ENCODE measurements at regions of chr3 and their contacts with region 1.

Region 1: GRCh38 chr3:197541756-197542539 is 13.8 kb downstream of the BDH1 start:
- DNase-seq: peak; percentile 83
- ATAC-seq: peak; percentile 46
- H3K4me3 Mint-ChIP-seq: peak overlapping the region; percentile 46
- H3K27ac Mint-ChIP-seq: peak overlapping the region; percentile 97
- H3K4me1 Mint-ChIP-seq: peaks cover 48% of the 10 kb centered on the region
- H3K27me3 Mint-ChIP-seq: no peaks in the 10 kb centered on the region; the same call in 1 of the 2 replicates
- CTCF ChIP-seq: no peak

Region 2: DNA sequence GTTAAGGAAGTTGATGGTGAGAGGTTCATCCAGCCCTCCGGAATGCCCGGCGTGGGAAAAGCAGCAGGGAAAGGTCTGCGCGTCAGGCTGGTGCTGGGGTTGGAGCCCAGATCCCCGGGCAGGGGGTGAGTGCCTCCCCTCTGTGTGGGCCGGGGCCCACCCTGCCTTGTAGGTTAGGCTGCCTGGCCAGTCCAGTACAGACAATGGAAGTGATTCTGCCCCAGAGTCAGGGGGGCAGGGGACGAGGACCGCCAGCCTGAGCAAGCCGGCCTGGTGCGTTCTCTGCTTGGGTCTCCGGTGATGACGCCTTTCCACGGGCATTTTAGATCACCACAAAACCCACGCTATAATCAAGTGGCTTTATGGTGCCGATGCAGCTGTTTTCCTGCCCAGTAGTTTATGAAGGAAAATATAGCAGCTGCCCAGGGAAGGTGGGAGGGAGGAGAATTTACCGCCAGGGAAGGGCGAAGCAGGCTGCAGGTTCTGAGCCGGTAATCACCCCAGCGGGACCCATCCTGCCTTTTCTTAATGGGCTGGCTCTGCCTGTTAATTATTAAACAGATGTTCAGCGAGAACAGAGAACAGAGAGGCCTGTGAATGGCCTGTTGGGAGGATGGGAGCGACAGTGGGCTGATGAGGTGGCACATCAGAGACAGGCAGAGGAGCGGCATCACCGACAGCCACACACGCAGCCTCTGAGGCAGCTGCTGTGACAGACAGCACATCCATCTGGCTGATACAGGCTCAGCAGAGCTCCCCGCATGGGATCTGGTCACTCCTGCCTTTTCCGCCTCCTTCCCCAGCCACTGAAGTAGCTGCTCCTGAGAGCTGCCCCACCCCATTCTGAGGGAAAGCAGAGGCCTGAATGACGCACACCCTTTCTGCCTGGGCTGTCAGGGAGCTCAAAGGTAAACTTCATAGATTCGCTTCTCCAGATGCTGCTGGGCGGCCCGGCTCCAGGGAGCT is 21.4 kb before region 1 on chr3:
- CTCF ChIA-PET with region 1: interaction called, 10 read pairs
- POLR2A ChIA-PET with region 1: interaction called, 4 read pairs
- DNase-seq: peak; percentile 44
- ATAC-seq: peak; percentile 80
- H3K4me3 Mint-ChIP-seq: peak overlapping the region; percentile 10; the same call in 1 of the 2 replicates
- H3K27ac Mint-ChIP-seq: peak overlapping the region; percentile 23; the same call in 1 of the 2 replicates
- H3K4me1 Mint-ChIP-seq: peaks cover 45% of the 10 kb centered on the region
- H3K27me3 Mint-ChIP-seq: no peaks in the 10 kb centered on the region
- CTCF ChIP-seq: no peak

Region 3: DNA sequence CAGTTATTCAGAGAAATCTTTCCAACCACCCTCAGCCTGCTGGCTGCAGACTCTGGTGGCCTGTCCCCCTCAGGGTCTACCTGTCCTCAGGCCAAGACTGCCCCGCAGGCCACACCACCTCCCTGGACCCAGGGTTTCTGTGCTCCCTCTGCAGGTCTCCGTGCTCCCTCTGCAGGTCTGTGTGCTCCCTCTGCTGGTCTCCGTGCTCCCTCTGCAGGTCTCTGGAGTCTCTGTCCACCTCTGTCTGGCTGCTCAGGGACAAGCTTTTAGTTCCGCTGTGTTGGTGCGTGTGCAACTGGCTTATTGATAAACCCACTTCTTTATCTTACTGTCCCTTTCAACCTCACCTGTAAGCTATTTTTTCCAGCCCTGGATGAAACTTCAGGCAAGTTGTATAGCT is 16.2 kb before region 1 on chr3:
- CTCF ChIA-PET with region 1: interaction called, 12 read pairs
- POLR2A ChIA-PET with region 1: interaction called, 4 read pairs
- DNase-seq: no peak
- ATAC-seq: no peak
- H3K4me3 Mint-ChIP-seq: no peak overlapping the region
- H3K27ac Mint-ChIP-seq: peak overlapping the region; percentile 31; the same call in 1 of the 2 replicates
- H3K4me1 Mint-ChIP-seq: peaks cover 20% of the 10 kb centered on the region
- H3K27me3 Mint-ChIP-seq: no peaks in the 10 kb centered on the region
- CTCF ChIP-seq: no peak

Measured in WTC11 (cell line).